ENCODE measurements at regions of chr3 and their contacts with region 1.

Region 1: GRCh38 chr3:111338059-111338698 is 203.8 kb upstream of the CD96 start:
- DNase-seq: peak; percentile 29
- H3K4me3 ChIP-seq: no peak overlapping the region
- CTCF ChIP-seq: peak; percentile 74

Region 2: DNA sequence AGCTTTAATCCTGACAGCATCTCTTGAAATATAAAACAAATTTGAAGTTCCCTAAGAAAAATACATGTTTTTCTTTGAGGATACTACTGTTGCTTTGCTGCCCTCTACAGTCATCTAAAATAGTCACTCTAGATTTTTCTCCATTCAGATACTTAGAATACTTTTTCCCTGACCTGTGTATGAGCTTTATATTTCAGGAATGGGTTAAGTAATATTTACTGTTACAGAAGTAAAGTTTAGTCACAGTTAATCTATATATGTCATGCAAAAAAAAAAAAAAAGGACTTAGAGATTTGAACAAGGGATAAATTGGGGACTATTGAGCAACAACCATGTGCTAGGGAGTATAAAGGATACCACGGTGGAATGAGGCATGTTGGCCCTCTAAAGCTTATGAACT is 257.8 kb before region 1 on chr3:
- CTCF ChIA-PET with region 1: interaction called, 20 read pairs
- POLR2A ChIA-PET with region 1: interaction called, 3 read pairs
- DNase-seq: no peak
- H3K4me3 ChIP-seq: no peak overlapping the region
- CTCF ChIP-seq: peak; percentile 35

Region 3: DNA sequence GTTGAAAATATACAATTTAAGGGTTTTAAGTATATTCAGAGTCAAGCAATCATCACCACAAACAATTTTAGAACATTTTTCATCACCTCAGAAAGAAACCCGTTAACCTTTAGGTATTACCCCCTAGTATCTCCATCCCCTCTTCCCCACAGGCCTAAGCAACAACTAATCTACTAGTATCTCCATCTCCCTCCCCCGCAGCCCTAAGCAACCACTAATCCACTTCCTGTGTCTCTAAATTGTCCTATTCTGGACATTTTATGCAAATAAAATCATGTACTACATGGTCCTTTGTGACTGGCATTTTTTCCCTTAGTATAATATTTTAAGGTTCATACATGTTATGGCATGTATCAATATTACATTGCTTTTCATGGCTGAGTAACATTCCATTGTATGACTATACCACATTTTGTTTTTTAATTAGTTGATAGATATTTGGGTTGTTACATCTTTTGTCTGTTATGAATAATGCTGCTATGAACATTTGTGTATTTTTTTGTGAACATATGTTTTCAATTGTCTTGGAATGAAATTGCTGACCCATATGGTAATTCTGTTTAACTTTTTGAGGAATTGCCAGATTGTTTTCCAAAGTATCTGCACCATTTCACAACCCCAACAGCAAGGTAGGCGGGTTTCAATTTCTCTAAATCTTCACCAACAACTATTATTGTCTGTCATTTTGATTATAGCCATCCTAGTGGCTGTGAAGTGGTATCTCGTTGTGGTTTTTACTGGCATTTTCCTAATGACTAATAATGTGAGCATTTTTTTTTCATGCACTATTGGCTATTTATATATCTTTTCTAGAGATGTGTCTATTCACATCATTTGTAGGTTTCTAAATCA is 11.8 kb before region 1 on chr3:
- CTCF ChIA-PET with region 1: interaction called, 11 read pairs
- POLR2A ChIA-PET with region 1: no interaction called
- DNase-seq: peak; percentile 51
- H3K4me3 ChIP-seq: no peak overlapping the region
- CTCF ChIP-seq: no peak

Region 4: GRCh38 chr3:111594205-111594604 is 256.0 kb after region 1 on chr3:
- CTCF ChIA-PET with region 1: no interaction called
- POLR2A ChIA-PET with region 1: no interaction called
- DNase-seq: peak; percentile 47
- H3K4me3 ChIP-seq: no peak overlapping the region
- CTCF ChIP-seq: no peak

Region 5: DNA sequence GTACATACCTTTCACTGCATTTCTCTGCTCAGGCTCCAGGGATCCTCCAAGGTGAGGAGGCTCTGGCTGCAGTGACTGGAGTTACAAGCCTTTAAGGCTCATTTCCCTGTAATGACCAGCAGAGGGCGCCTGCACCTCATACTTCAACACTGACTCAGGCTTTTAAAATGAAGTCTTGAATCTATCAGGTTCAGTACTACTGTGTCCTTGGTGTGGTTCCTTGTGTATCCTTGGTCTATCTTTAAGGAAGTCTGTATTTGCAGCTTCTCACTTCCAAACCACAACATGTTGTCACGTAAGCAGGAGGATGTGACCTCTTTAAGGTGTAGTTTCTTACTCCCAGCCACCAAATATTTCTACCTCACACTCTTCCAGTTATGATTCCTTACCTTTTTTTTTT is 379.4 kb after region 1 on chr3:
- CTCF ChIA-PET with region 1: no interaction called
- POLR2A ChIA-PET with region 1: no interaction called
- DNase-seq: peak; percentile 57
- H3K4me3 ChIP-seq: no peak overlapping the region
- CTCF ChIP-seq: peak; percentile 80

Measured in AG04449 (cell line).